Activated CD8-positive, alpha-beta T cell treated with anti-CD3 and anti-CD28 coated beads for 36 hours (primary cell): ENCODE measurements at regions of chr16 and their contacts with region 1.

Region 1: DNA sequence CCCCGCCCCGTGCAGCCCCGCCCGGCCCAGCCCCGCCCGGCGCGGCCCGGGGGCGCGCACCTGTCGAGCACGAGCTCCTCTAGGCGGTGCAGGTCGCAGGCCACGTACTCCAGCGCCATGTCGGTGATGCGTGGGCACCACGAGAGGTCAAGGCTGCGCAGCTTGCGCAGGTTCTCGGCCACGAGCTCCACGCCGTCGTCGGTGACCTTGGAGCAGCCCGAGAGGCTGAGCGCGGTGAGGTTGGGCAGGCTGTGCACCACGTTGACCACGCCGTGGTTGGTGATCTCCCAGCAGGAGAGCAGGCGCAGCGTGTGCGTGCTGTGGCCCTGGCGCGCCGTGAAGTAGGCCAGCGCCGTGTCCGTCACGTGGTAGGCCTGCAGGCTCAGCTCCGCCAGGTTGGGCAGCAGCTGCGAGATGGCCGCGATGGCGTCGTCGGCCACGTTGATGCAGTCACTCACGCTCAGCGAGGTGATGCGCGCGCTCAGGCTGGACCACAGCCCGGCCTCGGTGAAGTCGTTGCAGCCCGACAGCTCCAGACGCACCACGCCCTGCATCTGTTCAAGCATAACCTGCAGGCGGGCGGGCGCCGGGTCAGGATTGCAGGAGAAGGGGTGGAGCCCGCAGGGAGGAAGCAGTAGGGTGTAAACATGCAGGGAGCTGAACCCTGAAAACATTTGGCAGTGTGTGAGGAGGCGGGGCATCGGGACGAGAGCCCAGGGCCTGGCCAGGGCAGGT is 5.3 kb upstream of the WDR24 start:
- DNase-seq: peak; percentile 79
- ATAC-seq: peak; percentile 82
- H3K4me3 Mint-ChIP-seq: peak overlapping the region; percentile 78
- H3K27ac Mint-ChIP-seq: peak overlapping the region; percentile 75
- H3K4me1 Mint-ChIP-seq: peaks cover 20% of the 10 kb centered on the region
- H3K27me3 Mint-ChIP-seq: peaks cover 4% of the 10 kb centered on the region
- CTCF ChIP-seq: no peak

Region 2: GRCh38 chr16:518858-519257 is 176.7 kb before region 1 on chr16:
- CTCF ChIA-PET with region 1: no interaction called
- POLR2A ChIA-PET with region 1: no interaction called
- intact Hi-C with region 1: no loop called
- DNase-seq: no peak
- ATAC-seq: no peak
- H3K4me3 Mint-ChIP-seq: no peak overlapping the region
- H3K27ac Mint-ChIP-seq: no peak overlapping the region
- H3K4me1 Mint-ChIP-seq: peaks cover 2% of the 10 kb centered on the region
- H3K27me3 Mint-ChIP-seq: no peaks in the 10 kb centered on the region
- CTCF ChIP-seq: no peak

Region 3: GRCh38 chr16:679814-680622 is 15.5 kb before region 1 on chr16 and contains the start of gene STUB1:
- CTCF ChIA-PET with region 1: no interaction called
- POLR2A ChIA-PET with region 1: interaction called, 16 read pairs
- intact Hi-C with region 1: no loop called
- DNase-seq: peak; percentile 88
- ATAC-seq: peak; percentile 67
- H3K4me3 Mint-ChIP-seq: peak within 1 kb of the TSS; percentile 83
- H3K27ac Mint-ChIP-seq: peak within 1 kb of the TSS; percentile 90
- H3K4me1 Mint-ChIP-seq: peaks cover 40% of the 10 kb centered on the region
- H3K27me3 Mint-ChIP-seq: peaks cover 6% of the 10 kb centered on the region
- CTCF ChIP-seq: no peak
- total RNA-seq, gene STUB1: 57.1 to 61.7 TPM